ENCODE measurements at regions of chr7 and their contacts with region 1.

Region 1: GRCh38 chr7:78634093-78634492 is 819.4 kb downstream of the MAGI2 start:
- DNase-seq: no peak
- ATAC-seq: no peak
- H3K4me3 ChIP-seq: no peak overlapping the region
- H3K4me3 Mint-ChIP-seq: no peak overlapping the region
- H3K27ac ChIP-seq: no peak overlapping the region
- H3K27ac Mint-ChIP-seq: no peak overlapping the region
- H3K4me1 ChIP-seq: no peaks in the 10 kb centered on the region
- H3K4me1 Mint-ChIP-seq: no peaks in the 10 kb centered on the region
- H3K27me3 ChIP-seq: no peaks in the 10 kb centered on the region
- H3K27me3 Mint-ChIP-seq: no peaks in the 10 kb centered on the region
- CTCF ChIP-seq: no peak

Region 2: DNA sequence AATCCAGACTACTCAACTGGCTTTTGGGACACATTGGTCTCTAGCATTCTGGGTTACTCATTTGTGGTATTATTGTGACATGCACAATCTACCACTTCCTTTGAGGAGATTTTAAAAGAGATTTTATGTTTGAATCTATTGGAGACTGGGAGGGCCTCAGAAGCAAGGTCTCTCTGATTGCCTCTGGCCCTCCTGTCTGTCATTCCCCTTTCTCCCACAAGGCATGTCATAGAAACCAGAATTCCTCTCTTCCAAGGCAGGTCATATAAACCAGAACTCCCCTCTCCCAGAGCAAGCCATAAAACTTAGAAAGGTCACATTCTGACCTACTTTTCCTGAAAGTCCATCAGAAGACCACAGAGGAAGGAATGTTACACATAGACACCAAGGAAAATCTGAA is 57.9 kb before region 1 on chr7:
- CTCF ChIA-PET with region 1: no interaction called
- POLR2A ChIA-PET with region 1: no interaction called
- intact Hi-C with region 1: loop called (anchors 10 kb)
- DNase-seq: no peak
- ATAC-seq: no peak
- H3K4me3 ChIP-seq: no peak overlapping the region
- H3K4me3 Mint-ChIP-seq: no peak overlapping the region
- H3K27ac ChIP-seq: no peak overlapping the region
- H3K27ac Mint-ChIP-seq: no peak overlapping the region
- H3K4me1 ChIP-seq: no peaks in the 10 kb centered on the region
- H3K4me1 Mint-ChIP-seq: no peaks in the 10 kb centered on the region
- H3K27me3 ChIP-seq: no peaks in the 10 kb centered on the region
- H3K27me3 Mint-ChIP-seq: no peaks in the 10 kb centered on the region
- CTCF ChIP-seq: no peak

Measured in B cell (primary cell).